CD8-positive, alpha-beta memory T cell (primary cell): ENCODE measurements at regions of chr19 and their contacts with region 1.

Region 1: GRCh38 chr19:2507109-2507508 is 31.2 kb downstream of the GADD45B start:
- DNase-seq: peak in 3 of 5 donors; percentile 36 to 62 (median 57)
- H3K4me3 ChIP-seq: no peak overlapping the region
- H3K4me3 Mint-ChIP-seq: peak overlapping the region in 5 of 7 donors; percentile 34 to 65 (median 46)
- H3K27ac ChIP-seq: peak overlapping the region; percentile 43
- H3K27ac Mint-ChIP-seq: peak overlapping the region in 7 of 8 donors; percentile 18 to 90 (median 72)
- H3K4me1 ChIP-seq: peaks cover 24% of the 10 kb centered on the region
- H3K4me1 Mint-ChIP-seq: peaks cover 19 to 40% (median 20%) of the 10 kb centered on the region in 3 donors
- H3K27me3 ChIP-seq: no peaks in the 10 kb centered on the region
- H3K27me3 Mint-ChIP-seq: no peaks in the 10 kb centered on the region

Region 2: DNA sequence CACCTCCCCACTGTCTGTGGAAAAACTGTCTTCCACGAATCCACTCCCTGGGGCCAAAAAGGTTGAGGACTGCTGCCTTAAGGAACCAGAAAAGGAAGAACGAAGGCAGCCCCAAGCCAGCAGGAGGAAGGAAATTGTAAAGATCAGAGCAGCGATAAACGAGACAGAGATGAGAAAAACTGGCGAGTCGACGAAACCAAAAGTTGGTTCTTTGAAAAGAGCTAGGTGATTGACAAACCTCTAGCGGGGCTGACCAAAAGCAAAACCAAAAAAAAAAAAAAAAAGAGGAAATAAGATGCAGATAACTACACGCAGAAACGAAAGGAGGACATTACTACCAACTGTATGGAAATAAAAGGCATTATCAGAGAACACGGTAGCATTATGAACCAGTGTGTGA is 45.8 kb after region 1 on chr19:
- CTCF ChIA-PET with region 1: no interaction called
- POLR2A ChIA-PET with region 1: interaction called, 16 read pairs
- DNase-seq: peak; percentile 30 to 76 (median 65)
- H3K4me3 ChIP-seq: peak overlapping the region; percentile 53
- H3K4me3 Mint-ChIP-seq: peak overlapping the region; percentile 57 to 85 (median 80)
- H3K27ac ChIP-seq: no peak overlapping the region
- H3K27ac Mint-ChIP-seq: peak overlapping the region; percentile 51 to 93 (median 68)
- H3K4me1 ChIP-seq: peaks cover 11% of the 10 kb centered on the region
- H3K4me1 Mint-ChIP-seq: peaks cover 12 to 23% (median 15%) of the 10 kb centered on the region in 3 donors
- H3K27me3 ChIP-seq: no peaks in the 10 kb centered on the region
- H3K27me3 Mint-ChIP-seq: no peaks in the 10 kb centered on the region